Activated T-helper 1 cell treated with anti-CD3 and anti-CD28 coated beads, Interleukin-12 subunit alpha, Interleukin-12 subunit beta, Interleukin-2, Interleukin-4 antibody, amounts not matched to agents 30 ng/mL and 10 ng/mL and 1 ng/mL, durations not matched to agents 14 hours and 24 hours and 36 hours (primary cell): ENCODE measurements at regions of chr5 and their contacts with region 1.

Region 1: DNA sequence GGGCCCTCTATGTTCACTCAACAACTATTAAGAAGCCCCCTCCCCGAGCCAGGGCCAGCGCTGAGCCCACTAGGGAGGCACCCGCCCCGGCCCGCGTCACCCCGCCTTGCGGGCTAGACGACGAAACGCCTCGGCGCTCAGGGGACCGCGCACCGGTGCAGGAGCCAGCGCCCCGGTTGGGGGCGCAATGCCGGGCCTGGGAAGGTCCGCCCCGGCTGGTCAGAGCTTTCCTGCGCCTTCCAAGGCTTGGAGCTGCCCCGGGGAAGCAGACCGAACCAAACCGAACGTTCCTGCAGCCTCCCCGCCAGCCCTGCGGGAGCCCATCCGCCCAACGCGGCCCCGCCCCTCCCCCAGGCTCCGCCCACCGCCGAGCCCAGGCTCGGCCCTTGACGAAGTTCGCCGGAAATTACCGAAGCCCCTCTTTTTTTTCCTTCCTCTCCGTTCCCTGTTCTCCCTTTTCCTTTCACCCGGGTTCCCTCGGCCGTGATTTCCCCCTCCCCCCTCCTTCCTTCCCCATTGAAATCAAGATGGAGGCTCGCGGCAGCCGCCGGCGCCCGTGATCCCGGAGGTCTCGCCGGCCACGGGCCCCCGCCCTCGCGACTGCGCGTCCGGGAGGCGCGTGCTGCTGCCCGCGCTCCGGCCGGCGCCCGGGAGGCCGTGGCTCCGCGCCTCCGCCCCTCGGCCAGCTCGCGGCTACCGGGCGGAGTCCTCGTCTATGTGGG is at the start of gene TRIO:
- DNase-seq: peak; percentile 66
- H3K4me3 Mint-ChIP-seq: peak within 1 kb of the TSS; percentile 83
- H3K27ac Mint-ChIP-seq: peak within 1 kb of the TSS; percentile 72
- H3K4me1 Mint-ChIP-seq: peaks cover 14% of the 10 kb centered on the region
- H3K27me3 Mint-ChIP-seq: peaks cover 51% of the 10 kb centered on the region
- total RNA-seq, gene TRIO: 10.2 and 11.4 TPM in 2 replicates

Region 2: GRCh38 chr5:14011089-14012004 is 131.6 kb before region 1 on chr5:
- intact Hi-C with region 1: loop called (anchors 2 kb)
- DNase-seq: peak; percentile 17
- H3K4me3 Mint-ChIP-seq: peak overlapping the region; percentile 82
- H3K27ac Mint-ChIP-seq: no peak overlapping the region
- H3K4me1 Mint-ChIP-seq: no peaks in the 10 kb centered on the region
- H3K27me3 Mint-ChIP-seq: peaks cover 24% of the 10 kb centered on the region

Region 3: DNA sequence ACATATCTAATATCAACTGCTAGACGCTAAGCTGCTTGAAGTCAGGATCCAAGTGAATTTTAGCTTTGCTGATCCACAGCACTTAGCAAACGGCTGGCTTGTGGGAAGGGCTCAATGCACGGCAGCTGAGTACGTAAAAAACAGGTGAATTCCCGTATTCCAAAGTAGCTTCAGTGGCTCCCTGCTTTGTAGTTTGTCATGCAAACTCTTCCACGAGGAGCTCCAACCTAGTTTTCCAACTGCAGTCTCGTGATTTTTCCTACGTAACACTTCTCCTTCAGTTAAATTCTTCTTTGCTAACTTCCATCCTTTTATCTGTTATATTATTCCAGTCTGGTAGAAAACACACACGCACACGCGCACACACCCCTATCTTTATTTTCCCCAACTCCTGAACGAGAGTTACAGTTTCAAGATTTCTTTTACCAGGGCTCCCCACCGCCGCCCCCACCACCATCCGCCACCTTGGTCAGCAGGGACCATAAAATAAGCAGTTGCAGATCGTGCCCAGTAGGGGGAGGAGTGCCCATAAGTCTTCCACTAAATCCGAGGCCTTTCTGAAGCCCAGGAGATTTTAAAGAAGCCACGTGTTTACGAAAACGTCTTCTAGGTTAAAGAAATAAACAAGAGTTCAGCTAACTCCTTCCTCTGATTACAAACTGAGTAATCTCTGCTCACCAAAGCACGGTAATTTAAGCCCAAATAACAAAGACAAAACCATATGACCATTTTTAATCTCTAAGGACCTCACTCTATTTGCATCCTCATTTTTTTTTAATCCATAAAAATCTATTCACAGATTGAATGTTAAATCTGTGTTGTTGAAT is 34.6 kb before region 1 on chr5:
- intact Hi-C with region 1: loop called (anchors 2 kb)
- DNase-seq: no peak
- H3K4me3 Mint-ChIP-seq: peak overlapping the region; percentile 61
- H3K27ac Mint-ChIP-seq: peak overlapping the region; percentile 40
- H3K4me1 Mint-ChIP-seq: peaks cover 26% of the 10 kb centered on the region
- H3K27me3 Mint-ChIP-seq: peaks cover 12% of the 10 kb centered on the region

Region 4: GRCh38 chr5:14131855-14132503 is 11.0 kb before region 1 on chr5:
- intact Hi-C with region 1: no loop called
- DNase-seq: no peak
- H3K4me3 Mint-ChIP-seq: no peak overlapping the region
- H3K27ac Mint-ChIP-seq: no peak overlapping the region
- H3K4me1 Mint-ChIP-seq: no peaks in the 10 kb centered on the region
- H3K27me3 Mint-ChIP-seq: peaks cover 13% of the 10 kb centered on the region

Region 5: DNA sequence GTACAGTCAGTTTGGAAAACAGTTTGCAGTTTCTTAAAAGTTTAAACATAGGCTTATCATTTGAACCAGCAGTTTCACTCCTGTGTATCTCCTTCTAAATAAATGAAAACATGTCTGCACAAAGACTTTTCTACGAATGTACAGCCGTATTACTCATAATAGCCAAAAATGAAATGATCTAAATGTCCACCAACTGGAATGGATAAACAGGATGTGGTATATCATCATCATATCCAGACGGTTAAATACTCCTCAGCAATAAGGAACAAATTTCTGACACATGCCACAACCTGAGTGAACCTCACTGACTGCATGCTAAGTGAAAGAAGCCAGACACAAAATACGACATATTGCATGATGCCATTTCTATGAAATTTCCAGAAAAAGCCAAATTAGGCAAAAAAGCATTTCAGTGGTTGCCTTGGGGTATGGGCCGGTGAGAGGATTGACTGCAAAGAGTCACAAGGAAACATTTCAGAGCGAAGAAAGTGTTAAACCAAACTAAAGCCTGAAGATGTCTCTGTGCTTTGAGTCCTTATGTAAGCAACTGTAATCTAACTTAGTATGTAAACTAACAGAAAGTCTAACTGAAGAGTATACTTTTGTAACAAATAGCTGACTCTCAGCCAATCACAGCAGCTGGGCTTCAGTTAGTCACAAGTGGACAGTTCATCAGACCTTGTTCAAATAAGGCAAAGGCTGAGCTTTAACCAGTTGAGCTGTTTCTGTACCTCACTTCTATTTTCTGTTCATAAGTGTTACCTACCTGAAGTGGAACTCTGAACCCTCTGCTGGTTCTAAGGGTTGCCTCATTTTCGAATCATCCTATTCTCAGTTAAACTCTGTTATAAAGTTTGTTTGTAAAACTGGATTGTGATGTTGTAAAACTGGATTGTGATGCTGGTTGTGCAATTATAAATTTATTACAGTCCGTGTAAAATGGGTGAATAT is 65.4 kb after region 1 on chr5:
- intact Hi-C with region 1: loop called (anchors 2 kb)
- DNase-seq: no peak
- H3K4me3 Mint-ChIP-seq: no peak overlapping the region
- H3K27ac Mint-ChIP-seq: peak overlapping the region; percentile 55
- H3K4me1 Mint-ChIP-seq: peaks cover 54% of the 10 kb centered on the region
- H3K27me3 Mint-ChIP-seq: peaks cover 6% of the 10 kb centered on the region

Region 6: GRCh38 chr5:14264604-14265316 is 121.8 kb after region 1 on chr5:
- intact Hi-C with region 1: loop called (anchors 1 kb)
- DNase-seq: peak; percentile 70
- H3K4me3 Mint-ChIP-seq: peak overlapping the region; percentile 66
- H3K27ac Mint-ChIP-seq: no peak overlapping the region
- H3K4me1 Mint-ChIP-seq: peaks cover 19% of the 10 kb centered on the region
- H3K27me3 Mint-ChIP-seq: peaks cover 13% of the 10 kb centered on the region